PC-9 (cell line): ENCODE measurements at regions of chr11 and their contacts with region 1.

Region 1: DNA sequence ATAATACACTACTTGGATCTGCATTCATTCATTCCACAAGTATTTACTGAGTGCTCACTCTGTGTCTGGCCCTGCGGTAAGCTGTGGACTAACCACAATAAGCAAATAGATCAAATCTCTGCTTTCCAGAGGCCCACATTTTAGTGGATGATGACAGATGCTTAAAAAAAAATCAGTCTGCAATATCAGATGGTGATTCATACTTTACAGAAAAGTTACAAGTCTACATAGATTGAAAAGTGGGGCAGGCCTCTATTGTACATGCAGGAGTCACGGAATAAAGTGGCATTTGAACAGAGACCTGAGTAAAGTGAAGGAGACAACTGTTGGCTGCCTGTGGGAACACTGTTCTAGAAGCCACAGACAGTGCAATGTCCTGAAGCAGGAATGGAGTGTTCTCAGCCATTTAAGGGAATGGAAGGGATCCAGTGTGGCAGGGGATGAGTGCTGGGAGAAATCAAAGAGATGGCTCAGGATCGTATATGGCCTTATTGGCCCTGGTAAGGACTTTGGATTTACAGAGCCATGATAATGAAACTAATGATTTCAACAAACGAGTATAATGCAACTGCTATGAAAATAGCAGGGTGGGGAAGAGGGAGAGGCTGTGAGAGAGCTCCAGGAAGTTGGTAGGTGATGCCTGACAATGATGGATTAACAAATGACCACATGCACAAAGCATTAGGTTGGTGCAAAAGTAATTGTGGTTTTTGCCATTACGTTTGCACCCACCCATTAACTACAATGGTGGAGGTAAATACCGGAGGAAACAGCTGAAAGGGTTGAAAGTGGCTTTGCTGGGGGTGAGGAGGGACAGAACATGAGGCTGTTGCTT is 31.1 kb downstream of the TMEM45B start:
- DNase-seq: peak; percentile 68 to 99
- H3K4me3 ChIP-seq: peak overlapping the region; percentile 47
- H3K27ac ChIP-seq: peak overlapping the region; percentile 99
- H3K4me1 ChIP-seq: peaks cover 46% of the 10 kb centered on the region
- H3K27me3 ChIP-seq: no peaks in the 10 kb centered on the region
- CTCF ChIP-seq: no peak

Region 2: GRCh38 chr11:129364143-129364654 is 482.5 kb before region 1 on chr11:
- CTCF ChIA-PET with region 1: no interaction called
- POLR2A ChIA-PET with region 1: no interaction called
- intact Hi-C with region 1: loop called (anchors 10 kb)
- DNase-seq: peak; percentile 85 to 87
- H3K4me3 ChIP-seq: no peak overlapping the region
- H3K27ac ChIP-seq: no peak overlapping the region
- H3K4me1 ChIP-seq: peaks cover 42% of the 10 kb centered on the region
- H3K27me3 ChIP-seq: no peaks in the 10 kb centered on the region
- CTCF ChIP-seq: peak; percentile 97

Region 3: GRCh38 chr11:129785383-129786111 is 61.2 kb before region 1 on chr11:
- CTCF ChIA-PET with region 1: no interaction called
- POLR2A ChIA-PET with region 1: interaction called, 5 read pairs
- intact Hi-C with region 1: loop called (anchors 2 kb)
- DNase-seq: peak in 1 of 2 experiments; percentile 61
- H3K4me3 ChIP-seq: no peak overlapping the region
- H3K27ac ChIP-seq: no peak overlapping the region
- H3K4me1 ChIP-seq: peaks cover 18% of the 10 kb centered on the region
- H3K27me3 ChIP-seq: no peaks in the 10 kb centered on the region
- CTCF ChIP-seq: peak; percentile 73

Region 4: GRCh38 chr11:129828301-129828836 is 18.3 kb before region 1 on chr11:
- CTCF ChIA-PET with region 1: no interaction called
- POLR2A ChIA-PET with region 1: no interaction called
- intact Hi-C with region 1: loop called (anchors 2 kb)
- DNase-seq: peak; percentile 60 to 98
- H3K4me3 ChIP-seq: peak overlapping the region; percentile 33; the same call in 1 of the 2 replicates
- H3K27ac ChIP-seq: peak overlapping the region; percentile 90
- H3K4me1 ChIP-seq: peaks cover 63% of the 10 kb centered on the region
- H3K27me3 ChIP-seq: no peaks in the 10 kb centered on the region
- CTCF ChIP-seq: no peak

Region 5: GRCh38 chr11:129861702-129862113 is 15.0 kb after region 1 on chr11:
- CTCF ChIA-PET with region 1: interaction called, 3 read pairs
- POLR2A ChIA-PET with region 1: no interaction called
- intact Hi-C with region 1: loop called (anchors 1 kb)
- DNase-seq: peak; percentile 92 to 100
- H3K4me3 ChIP-seq: peak overlapping the region; percentile 41; the same call in 1 of the 2 replicates
- H3K27ac ChIP-seq: peak overlapping the region; percentile 84
- H3K4me1 ChIP-seq: peaks cover 80% of the 10 kb centered on the region
- H3K27me3 ChIP-seq: no peaks in the 10 kb centered on the region
- CTCF ChIP-seq: no peak